PC-9 (cell line): ENCODE measurements at regions of chr1 and their contacts with region 1.

Region 1: DNA sequence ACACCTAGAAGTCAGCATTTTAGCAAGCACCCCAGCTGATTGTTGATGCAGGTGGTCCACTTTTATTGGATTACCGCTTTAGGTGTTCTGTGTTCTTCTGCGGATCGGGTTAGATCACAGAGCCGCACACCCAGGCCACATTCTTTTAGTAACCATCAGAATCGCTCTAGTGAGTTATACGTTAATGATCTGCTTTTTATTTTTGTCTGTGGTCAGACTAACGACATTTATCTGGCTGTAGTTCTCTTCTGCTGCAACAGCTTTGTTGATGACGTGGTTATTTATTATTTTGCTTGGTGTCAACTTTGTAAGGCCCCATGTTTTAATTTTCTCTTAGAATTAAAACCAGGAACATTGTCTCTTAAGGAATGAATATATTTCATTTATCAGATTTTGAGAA is 18.2 kb downstream of the SCCPDH start:
- DNase-seq: no peak
- H3K4me3 ChIP-seq: no peak overlapping the region
- H3K27ac ChIP-seq: no peak overlapping the region
- H3K4me1 ChIP-seq: no peaks in the 10 kb centered on the region
- H3K27me3 ChIP-seq: no peaks in the 10 kb centered on the region
- CTCF ChIP-seq: no peak

Region 2: GRCh38 chr1:245858722-245859492 is 883.5 kb before region 1 on chr1:
- CTCF ChIA-PET with region 1: no interaction called
- POLR2A ChIA-PET with region 1: no interaction called
- intact Hi-C with region 1: no loop called
- DNase-seq: no peak
- H3K4me3 ChIP-seq: no peak overlapping the region
- H3K27ac ChIP-seq: no peak overlapping the region
- H3K4me1 ChIP-seq: no peaks in the 10 kb centered on the region
- H3K27me3 ChIP-seq: no peaks in the 10 kb centered on the region
- CTCF ChIP-seq: no peak

Region 3: GRCh38 chr1:246176126-246177024 is 566.0 kb before region 1 on chr1:
- CTCF ChIA-PET with region 1: no interaction called
- POLR2A ChIA-PET with region 1: interaction called, 10 read pairs
- intact Hi-C with region 1: no loop called
- DNase-seq: peak in 1 of 2 experiments; percentile 54
- H3K4me3 ChIP-seq: no peak overlapping the region
- H3K27ac ChIP-seq: no peak overlapping the region
- H3K4me1 ChIP-seq: peaks cover 5% of the 10 kb centered on the region; the same call in 1 of the 2 replicates
- H3K27me3 ChIP-seq: no peaks in the 10 kb centered on the region
- CTCF ChIP-seq: no peak